ENCODE measurements at regions of chr19 and their contacts with region 1.

Region 1: GRCh38 chr19:5690125-5690954 is at the start of gene RPL36:
- DNase-seq: peak; percentile 95
- CTCF ChIP-seq: peak; percentile 99

Region 2: DNA sequence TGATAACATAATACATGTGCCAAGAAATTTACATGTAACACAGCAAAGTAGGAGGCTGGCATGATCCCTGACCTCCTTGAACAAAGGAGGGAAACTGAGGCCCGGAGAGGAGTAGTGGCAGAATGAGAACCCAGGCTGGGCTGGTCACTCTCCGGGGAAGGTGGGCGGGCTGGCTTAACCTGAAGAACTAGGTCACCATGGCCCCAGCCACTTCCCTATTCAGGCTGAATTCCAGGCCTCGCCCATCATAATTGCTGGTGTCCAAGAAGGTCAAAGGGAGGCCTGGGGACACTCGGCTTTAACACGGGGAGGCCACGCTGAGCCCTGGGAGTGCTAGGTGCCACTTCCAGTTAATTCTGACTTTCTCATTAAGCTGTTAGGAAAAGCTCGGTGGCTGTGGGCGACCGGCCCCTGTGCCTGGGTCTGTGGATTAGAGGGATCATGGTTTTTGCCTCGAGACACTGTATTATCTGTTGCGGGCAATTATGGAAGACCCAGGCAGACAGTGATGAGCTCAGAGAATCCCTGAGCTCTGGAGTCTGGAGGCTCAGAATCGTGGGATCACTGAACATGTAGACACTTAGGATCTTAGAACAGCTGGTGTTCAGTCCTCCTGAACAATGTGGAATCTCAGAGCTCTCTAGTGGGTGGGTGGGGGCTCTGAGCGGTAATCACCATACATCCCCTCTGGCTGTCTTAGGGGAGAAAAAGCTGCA is 117.6 kb before region 1 on chr19:
- CTCF ChIA-PET with region 1: no interaction called
- POLR2A ChIA-PET with region 1: no interaction called
- DNase-seq: no peak
- CTCF ChIP-seq: no peak

Region 3: DNA sequence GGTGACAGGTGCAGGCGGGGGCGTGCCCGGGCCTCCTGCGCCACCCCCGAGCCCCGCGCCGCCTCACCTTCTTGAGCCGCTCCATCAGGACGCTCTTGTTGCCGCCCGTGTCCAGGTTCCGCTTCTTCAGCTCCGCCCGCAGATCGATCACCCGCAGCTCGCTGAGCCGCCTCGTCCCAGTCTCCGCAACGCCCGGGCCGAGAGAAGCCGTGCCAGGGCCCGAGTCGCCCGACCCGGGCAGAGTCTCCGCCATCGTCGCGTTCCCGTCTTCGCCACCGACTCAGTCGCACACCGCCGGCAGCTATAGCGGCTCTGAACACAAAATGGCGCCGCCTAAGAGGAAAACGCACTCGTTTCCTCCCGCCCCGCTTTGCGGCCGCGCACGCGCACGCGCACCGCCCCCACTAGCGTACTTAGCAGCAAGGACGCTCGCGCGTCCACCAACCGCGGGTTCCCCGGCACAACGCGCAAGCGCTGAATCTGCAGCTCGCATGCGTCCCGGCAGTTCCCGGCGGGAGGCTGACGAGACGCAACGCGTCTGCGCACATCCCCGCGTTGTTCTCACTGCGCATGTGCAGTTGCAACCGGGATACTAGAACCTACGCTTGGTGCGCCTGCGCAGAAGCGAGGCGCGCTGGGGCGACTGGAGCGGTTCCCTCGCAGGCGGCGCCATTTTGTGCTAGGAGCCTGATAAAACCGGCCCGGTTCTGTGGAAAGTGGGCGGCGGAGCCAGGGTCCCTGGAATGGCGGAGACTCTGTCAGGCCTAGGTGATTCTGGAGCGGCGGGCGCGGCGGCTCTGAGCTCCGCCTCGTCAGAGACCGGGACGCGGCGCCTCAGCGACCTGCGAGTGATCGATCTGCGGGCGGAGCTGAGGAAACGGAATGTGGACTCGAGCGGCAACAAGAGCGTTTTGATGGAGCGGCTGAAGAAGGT is 67.6 kb before region 1 on chr19 and contains the starts of genes SAFB and SAFB2:
- CTCF ChIA-PET with region 1: interaction called, 7 read pairs
- POLR2A ChIA-PET with region 1: interaction called, 11 read pairs
- DNase-seq: peak; percentile 99
- CTCF ChIP-seq: no peak

Region 4: GRCh38 chr19:5680083-5680436 is 10.3 kb before region 1 on chr19:
- CTCF ChIA-PET with region 1: interaction called, 32 read pairs
- POLR2A ChIA-PET with region 1: interaction called, 4 read pairs
- DNase-seq: peak; percentile 22
- CTCF ChIP-seq: no peak

Region 5: DNA sequence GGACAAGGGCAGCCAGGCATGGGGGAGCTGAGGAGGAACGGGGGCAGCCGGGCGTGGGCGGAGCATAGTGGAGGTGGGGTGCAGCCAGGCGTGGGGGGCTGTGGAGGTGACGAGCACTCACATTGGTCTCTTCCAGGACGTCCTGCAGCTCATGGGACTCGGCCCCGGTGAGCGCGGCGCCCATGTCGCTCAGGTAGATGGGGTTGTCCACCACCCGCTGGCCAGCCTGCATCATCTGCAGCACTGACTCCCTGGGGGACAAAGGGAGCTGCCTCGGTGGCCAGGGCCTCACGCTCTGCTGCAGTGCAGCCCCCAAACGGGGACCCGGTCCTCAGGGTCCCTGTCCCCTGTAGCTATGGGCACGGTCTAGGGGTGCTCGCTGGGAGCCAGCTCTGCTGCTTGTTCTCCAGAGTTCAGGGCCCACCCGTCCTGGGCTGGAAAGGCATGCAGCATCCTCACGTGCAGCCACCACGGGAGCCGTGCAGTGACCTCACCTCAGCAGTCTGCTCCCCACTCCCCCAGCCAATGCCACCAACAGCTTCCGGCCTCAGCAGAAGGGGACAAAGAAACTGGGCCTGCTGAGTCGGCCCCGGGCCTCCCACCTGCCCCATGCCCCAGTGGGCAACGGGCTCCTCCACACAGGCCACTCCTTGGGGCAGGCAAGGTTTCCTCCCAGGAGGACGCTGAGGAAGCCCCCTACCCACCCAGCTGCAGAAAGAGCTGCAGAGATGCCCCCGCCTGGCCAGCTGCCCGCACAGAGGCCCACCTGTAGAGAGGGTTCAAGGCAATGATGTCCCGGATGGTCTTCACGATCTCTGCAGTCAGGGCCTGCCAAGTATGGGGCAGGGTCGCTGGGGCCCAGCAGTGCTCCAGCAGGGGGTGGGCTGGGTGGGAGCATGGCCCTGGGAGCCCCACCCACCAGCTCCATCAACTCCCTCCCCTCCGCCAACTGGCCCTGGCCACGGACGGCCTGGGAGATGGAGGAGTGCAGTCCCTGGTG is 17.5 kb after region 1 on chr19:
- CTCF ChIA-PET with region 1: interaction called, 64 read pairs
- POLR2A ChIA-PET with region 1: interaction called, 7 read pairs
- DNase-seq: no peak
- CTCF ChIP-seq: no peak

Region 6: DNA sequence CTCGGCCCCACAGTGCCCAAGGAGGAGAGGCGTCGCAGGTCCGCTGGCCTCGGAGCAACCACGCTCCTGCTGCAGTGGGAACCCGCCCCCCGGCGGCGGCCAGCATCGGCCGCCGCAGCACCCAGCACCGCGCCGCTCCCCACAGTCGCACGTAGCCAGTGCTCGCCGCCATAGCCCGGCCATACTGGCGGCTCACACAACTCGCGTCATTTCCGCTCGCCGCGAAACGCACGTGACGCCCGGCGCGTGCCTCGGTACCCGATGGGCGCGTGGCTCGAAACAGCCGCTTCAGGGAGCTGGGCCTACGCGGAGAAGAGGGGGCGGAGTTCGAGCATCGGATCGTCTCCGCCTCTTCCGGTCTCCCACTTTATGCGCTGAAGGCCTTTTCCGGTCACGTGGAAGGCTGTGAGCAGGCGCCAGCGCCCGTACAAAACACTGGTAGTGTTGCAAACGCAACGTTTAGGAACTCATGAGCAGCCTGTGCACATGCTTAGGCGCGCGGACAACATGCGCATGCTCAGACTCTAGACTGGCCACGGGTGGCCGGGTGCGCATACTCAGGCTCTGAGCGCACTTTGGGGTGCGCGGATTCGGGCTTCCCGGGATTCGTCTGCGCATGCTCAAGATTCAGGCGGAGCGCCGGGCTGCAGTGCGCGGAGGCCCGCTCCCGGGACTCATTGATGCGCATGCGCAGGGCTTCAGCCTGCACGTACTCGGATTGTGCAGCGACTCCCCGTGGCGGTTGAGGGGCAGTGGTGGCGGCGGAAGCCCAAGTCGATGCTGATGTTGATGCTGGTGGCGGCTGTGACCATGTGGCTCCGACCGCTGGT is 29.8 kb after region 1 on chr19 and contains the starts of genes CATSPERD and LONP1:
- CTCF ChIA-PET with region 1: interaction called, 79 read pairs
- POLR2A ChIA-PET with region 1: interaction called, 8 read pairs
- DNase-seq: peak; percentile 100
- CTCF ChIP-seq: peak; percentile 93

Region 7: DNA sequence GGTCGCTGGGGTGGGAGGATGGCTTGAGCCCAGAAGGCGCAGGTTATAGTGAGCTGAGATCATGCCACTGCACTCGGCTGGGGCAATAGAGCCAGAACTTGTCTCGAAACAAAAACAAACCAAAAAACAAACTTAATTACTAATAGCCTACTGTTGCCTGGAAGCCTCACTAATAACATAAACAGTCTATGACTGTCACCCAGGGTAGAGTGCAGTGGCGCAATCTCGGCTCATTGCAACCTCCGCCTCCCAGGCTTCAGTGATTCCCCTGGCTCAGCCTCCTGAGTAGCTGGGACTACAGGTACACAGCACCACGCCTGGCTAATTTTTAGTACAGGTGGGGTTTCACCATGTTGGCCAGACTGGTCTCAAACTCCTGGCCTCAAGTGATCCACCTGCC is 48.1 kb after region 1 on chr19:
- CTCF ChIA-PET with region 1: no interaction called
- POLR2A ChIA-PET with region 1: no interaction called
- DNase-seq: no peak
- CTCF ChIP-seq: no peak

Region 8: GRCh38 chr19:5767949-5768348 is 77.6 kb after region 1 on chr19:
- CTCF ChIA-PET with region 1: no interaction called
- POLR2A ChIA-PET with region 1: no interaction called
- DNase-seq: no peak
- CTCF ChIP-seq: no peak